Ovary (tissue), 10 donors: ENCODE measurements at regions of chr17 and their contacts with region 1.

Region 1: GRCh38 chr17:72465191-72466024 is 344.6 kb downstream of the SOX9 start:
- DNase-seq: no peak
- H3K4me3 ChIP-seq: no peak overlapping the region
- H3K27ac ChIP-seq: no peak overlapping the region
- H3K4me1 ChIP-seq: no peaks in the 10 kb centered on the region
- H3K27me3 ChIP-seq: no peaks in the 10 kb centered on the region
- CTCF ChIP-seq: no peak
- EP300 ChIP-seq: no peak
- POLR2A ChIP-seq: no peak

Region 2: DNA sequence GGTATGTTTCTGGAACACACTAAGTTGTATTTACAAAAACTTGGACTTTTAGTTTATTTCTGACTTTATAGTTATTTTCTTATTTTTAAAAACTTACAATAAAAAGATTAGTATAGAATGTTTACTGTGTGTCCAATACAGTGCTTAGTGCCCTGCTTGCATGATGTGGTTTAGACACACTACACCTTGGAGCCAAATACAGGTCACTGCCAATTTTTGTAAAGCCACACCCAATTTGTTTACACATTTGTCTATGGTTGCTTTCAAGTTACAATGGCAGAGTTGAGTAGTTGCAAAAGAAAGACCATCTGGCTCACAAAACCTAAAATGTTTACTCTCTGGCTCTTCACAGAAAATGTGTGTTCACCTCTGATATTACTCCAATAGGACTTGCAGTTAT is 1489.0 kb before region 1 on chr17:
- intact Hi-C with region 1: loop called in 1 of 4 experiments (anchors 10 kb)
- DNase-seq: no peak
- H3K4me3 ChIP-seq: no peak overlapping the region
- H3K27ac ChIP-seq: no peak overlapping the region
- H3K4me1 ChIP-seq: no peaks in the 10 kb centered on the region
- H3K27me3 ChIP-seq: no peaks in the 10 kb centered on the region
- CTCF ChIP-seq: no peak
- EP300 ChIP-seq: no peak
- POLR2A ChIP-seq: no peak

Region 3: GRCh38 chr17:72376526-72377345 is 88.7 kb before region 1 on chr17:
- intact Hi-C with region 1: no loop called
- DNase-seq: no peak
- H3K4me3 ChIP-seq: no peak overlapping the region
- H3K27ac ChIP-seq: no peak overlapping the region
- H3K4me1 ChIP-seq: no peaks in the 10 kb centered on the region
- H3K27me3 ChIP-seq: no peaks in the 10 kb centered on the region
- CTCF ChIP-seq: no peak
- EP300 ChIP-seq: no peak
- POLR2A ChIP-seq: no peak

Region 4: GRCh38 chr17:72397687-72398086 is 67.7 kb before region 1 on chr17:
- intact Hi-C with region 1: no loop called
- DNase-seq: no peak
- H3K4me3 ChIP-seq: no peak overlapping the region
- H3K27ac ChIP-seq: no peak overlapping the region
- H3K4me1 ChIP-seq: no peaks in the 10 kb centered on the region
- H3K27me3 ChIP-seq: no peaks in the 10 kb centered on the region
- CTCF ChIP-seq: no peak
- EP300 ChIP-seq: no peak
- POLR2A ChIP-seq: no peak

Region 5: DNA sequence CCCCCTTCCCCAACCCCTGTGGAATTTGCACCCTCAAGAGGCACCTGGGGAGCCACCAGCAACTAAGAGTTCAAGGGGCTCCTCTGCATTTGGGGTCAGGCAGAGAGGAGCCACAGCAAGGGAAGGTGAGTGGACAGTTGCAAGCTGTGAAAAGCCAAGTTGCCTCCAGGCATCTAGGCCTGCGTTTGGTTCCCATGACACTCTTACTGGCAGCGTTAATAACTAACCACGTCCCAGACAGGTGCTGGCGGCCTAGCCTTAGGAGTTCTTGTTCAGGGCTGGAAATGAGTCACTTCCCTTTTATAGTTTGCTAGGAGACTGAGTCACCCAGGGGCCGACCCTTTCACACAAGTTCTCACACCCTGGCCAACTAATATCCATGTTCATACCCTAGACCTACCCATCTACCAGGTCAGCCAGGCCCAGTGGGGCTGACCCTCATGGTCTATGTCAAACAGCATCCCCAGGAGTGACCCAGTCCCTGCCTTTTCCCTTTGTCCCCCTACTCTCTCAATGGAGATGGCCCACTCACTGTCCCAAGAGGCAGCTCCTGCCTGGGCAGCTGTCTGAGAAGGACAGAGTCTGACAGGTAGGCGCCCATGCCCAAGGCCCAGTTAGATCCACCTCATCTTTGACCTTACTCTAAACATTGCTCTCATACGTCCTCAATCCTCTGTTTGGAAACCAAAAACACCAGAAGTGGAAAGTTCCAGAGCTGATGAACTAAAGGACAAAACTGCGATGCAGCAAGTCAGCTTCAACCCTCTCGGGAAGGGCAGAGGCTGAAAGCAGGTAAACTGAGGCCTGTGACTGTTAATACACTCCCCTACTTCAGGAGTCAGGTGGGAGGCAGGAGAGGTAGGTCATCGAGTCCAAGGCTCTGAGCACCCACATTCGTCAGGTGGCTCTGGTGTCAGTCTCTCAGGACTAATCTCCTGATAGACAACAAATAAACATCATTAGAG is 44.0 kb before region 1 on chr17:
- intact Hi-C with region 1: no loop called
- DNase-seq: no peak
- H3K4me3 ChIP-seq: no peak overlapping the region
- H3K27ac ChIP-seq: no peak overlapping the region
- H3K4me1 ChIP-seq: no peaks in the 10 kb centered on the region
- H3K27me3 ChIP-seq: no peaks in the 10 kb centered on the region
- CTCF ChIP-seq: no peak
- EP300 ChIP-seq: no peak
- POLR2A ChIP-seq: no peak

Region 6: GRCh38 chr17:72445055-72445991 is 20.1 kb before region 1 on chr17:
- intact Hi-C with region 1: no loop called
- DNase-seq: no peak
- H3K4me3 ChIP-seq: no peak overlapping the region
- H3K27ac ChIP-seq: no peak overlapping the region
- H3K4me1 ChIP-seq: no peaks in the 10 kb centered on the region
- H3K27me3 ChIP-seq: no peaks in the 10 kb centered on the region
- CTCF ChIP-seq: no peak
- EP300 ChIP-seq: no peak
- POLR2A ChIP-seq: no peak